ENCODE measurements at regions of chr7 and their contacts with region 1.

Region 1: GRCh38 chr7:83271212-83272099 is 108.8 kb upstream of the PCLO start:
- DNase-seq: peak in 1 of 2 experiments; percentile 5
- H3K4me3 ChIP-seq: no peak overlapping the region
- H3K4me3 Mint-ChIP-seq: no peak overlapping the region
- H3K27ac Mint-ChIP-seq: no peak overlapping the region
- H3K4me1 ChIP-seq: no peaks in the 10 kb centered on the region
- H3K4me1 Mint-ChIP-seq: no peaks in the 10 kb centered on the region
- H3K27me3 ChIP-seq: no peaks in the 10 kb centered on the region
- H3K27me3 Mint-ChIP-seq: peaks cover 10% of the 10 kb centered on the region
- CTCF ChIP-seq: peak in 1 of 2 experiments; percentile 37

Region 2: GRCh38 chr7:82945480-82945879 is 326.0 kb before region 1 on chr7:
- CTCF ChIA-PET with region 1: no interaction called
- POLR2A ChIA-PET with region 1: no interaction called
- intact Hi-C with region 1: loop called (anchors 1 kb)
- DNase-seq: no peak
- H3K4me3 ChIP-seq: no peak overlapping the region
- H3K4me3 Mint-ChIP-seq: no peak overlapping the region
- H3K27ac Mint-ChIP-seq: no peak overlapping the region
- H3K4me1 ChIP-seq: no peaks in the 10 kb centered on the region
- H3K4me1 Mint-ChIP-seq: no peaks in the 10 kb centered on the region
- H3K27me3 ChIP-seq: no peaks in the 10 kb centered on the region; the same call in 1 of the 2 replicates
- H3K27me3 Mint-ChIP-seq: no peaks in the 10 kb centered on the region
- CTCF ChIP-seq: no peak

Region 3: DNA sequence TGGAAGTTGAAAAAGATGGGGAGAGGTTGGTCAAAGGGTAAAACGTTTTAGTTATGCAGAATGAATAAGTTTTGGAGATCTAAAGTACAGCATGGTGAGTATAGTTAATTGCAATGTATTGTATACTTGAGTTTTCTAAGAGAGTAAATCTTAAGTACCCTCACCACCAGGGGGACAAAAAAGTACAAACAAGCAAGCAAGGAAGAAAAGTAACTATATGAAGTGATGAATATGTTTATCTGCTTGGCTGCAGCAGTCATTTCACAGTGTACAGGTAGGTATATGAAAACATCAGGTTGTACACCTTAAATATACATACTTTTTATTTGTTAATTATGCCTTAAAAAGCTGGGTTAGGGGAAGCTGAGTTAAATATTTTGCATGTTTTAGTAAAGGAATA is 266.0 kb before region 1 on chr7:
- CTCF ChIA-PET with region 1: no interaction called
- POLR2A ChIA-PET with region 1: no interaction called
- intact Hi-C with region 1: loop called (anchors 2 kb)
- DNase-seq: peak in 1 of 2 experiments; percentile 26
- H3K4me3 ChIP-seq: no peak overlapping the region
- H3K4me3 Mint-ChIP-seq: no peak overlapping the region
- H3K27ac Mint-ChIP-seq: no peak overlapping the region
- H3K4me1 ChIP-seq: no peaks in the 10 kb centered on the region
- H3K4me1 Mint-ChIP-seq: no peaks in the 10 kb centered on the region
- H3K27me3 ChIP-seq: no peaks in the 10 kb centered on the region
- H3K27me3 Mint-ChIP-seq: no peaks in the 10 kb centered on the region
- CTCF ChIP-seq: peak; percentile 22 to 40

Region 4: GRCh38 chr7:83162402-83163256 is 108.8 kb before region 1 on chr7 and contains the start of gene PCLO:
- CTCF ChIA-PET with region 1: no interaction called
- POLR2A ChIA-PET with region 1: no interaction called
- intact Hi-C with region 1: loop called (anchors 5 kb)
- DNase-seq: peak; percentile 92 to 93
- H3K4me3 ChIP-seq: peak within 1 kb of the TSS; percentile 91
- H3K4me3 Mint-ChIP-seq: peak within 1 kb of the TSS; percentile 87
- H3K27ac Mint-ChIP-seq: peak within 1 kb of the TSS; percentile 39
- H3K4me1 ChIP-seq: no peaks in the 10 kb centered on the region; the same call in 1 of the 2 replicates
- H3K4me1 Mint-ChIP-seq: no peaks in the 10 kb centered on the region
- H3K27me3 ChIP-seq: no peaks in the 10 kb centered on the region
- H3K27me3 Mint-ChIP-seq: no peaks in the 10 kb centered on the region
- CTCF ChIP-seq: no peak
- total RNA-seq, gene PCLO: 3.8 and 4.1 TPM in 2 replicates

Region 5: GRCh38 chr7:83365746-83366145 is 94.3 kb after region 1 on chr7:
- CTCF ChIA-PET with region 1: no interaction called
- POLR2A ChIA-PET with region 1: no interaction called
- intact Hi-C with region 1: loop called (anchors 10 kb)
- DNase-seq: no peak
- H3K4me3 ChIP-seq: no peak overlapping the region
- H3K4me3 Mint-ChIP-seq: no peak overlapping the region
- H3K27ac Mint-ChIP-seq: no peak overlapping the region
- H3K4me1 ChIP-seq: no peaks in the 10 kb centered on the region
- H3K4me1 Mint-ChIP-seq: no peaks in the 10 kb centered on the region
- H3K27me3 ChIP-seq: no peaks in the 10 kb centered on the region
- H3K27me3 Mint-ChIP-seq: peaks cover 2% of the 10 kb centered on the region
- CTCF ChIP-seq: no peak